ENCODE measurements at regions of chr9 and their contacts with region 1.

Region 1: GRCh38 chr9:121992571-121993212 is 100.4 kb downstream of the TTLL11 start:
- DNase-seq: no peak

Region 2: DNA sequence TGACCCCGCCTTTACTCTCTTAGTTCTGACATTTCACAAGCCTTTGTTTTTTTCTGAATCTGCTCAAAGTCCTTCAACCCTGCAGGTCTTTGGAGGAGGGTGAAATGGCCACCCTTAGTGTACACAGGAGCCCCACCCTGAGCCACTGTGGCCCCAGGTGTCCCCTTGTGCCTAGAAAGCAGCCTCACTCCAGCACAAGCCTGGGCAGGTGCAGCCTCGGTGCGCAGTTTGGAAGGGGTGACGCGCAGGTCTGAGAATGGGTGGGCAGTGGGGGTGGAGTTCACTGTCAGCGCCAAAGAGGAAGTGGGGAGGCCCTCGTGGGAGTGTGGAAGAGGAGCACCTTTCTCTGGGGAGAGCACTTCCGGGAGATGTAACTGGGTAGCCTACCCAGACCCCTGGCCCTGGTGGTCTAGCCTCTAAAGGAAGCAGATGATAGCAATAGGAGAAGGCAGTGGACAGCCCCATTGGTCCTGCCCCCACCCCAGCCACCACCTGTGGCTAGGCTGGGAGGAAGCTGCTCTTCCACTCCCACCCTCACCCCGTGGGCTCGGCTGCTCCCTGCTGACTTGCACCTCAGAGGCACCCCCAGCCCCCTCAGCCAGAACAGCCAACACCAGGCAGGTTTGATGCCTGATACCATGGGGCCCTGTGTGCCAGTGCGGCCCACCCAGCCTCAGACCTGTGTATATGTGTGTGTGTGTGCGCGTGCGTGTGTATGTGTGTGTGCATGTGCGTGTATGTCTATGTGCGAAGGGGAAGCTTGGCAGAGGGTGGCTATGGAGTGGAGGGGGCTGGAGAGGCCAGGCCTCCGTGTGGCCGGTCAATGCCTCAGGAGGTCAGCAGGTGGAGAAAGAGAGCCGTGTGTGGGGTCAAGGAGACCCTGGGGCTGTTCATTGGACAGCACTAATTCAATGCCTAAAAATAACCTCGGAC is 358.1 kb before region 1 on chr9:
- intact Hi-C with region 1: loop called (anchors 5 kb)
- DNase-seq: no peak

Region 3: DNA sequence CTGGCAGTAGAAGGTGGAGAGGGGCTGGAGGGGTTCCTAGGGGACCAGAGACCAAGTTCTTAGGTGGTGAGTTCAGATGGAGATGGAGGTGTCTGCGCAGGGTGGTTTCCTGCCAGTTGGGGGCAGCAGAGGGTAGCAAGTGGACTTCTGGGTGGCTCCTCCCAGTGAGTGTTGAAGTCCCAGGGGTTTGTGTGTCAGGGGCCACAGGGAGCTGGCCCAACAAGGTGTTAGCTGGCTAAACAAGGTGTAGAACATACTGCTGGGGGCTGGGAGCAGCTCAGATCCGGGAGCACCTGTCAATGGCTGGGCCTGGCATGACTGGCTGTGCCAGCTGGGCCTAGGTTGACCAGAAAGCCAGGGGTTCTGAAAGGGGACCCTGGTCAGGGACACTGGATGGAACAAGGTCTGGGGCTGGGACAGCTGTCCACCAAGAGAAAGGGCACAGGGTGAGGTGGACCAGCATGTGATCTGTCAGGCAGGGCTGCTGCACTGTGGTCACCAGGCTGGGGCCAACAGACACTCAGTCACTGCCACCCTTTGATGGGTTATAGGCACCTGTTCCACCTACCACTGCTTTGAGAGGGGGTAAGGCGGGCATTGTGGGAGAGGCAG is 305.7 kb before region 1 on chr9:
- intact Hi-C with region 1: loop called (anchors 2 kb)
- DNase-seq: no peak

Region 4: GRCh38 chr9:121744002-121744686 is 248.5 kb before region 1 on chr9:
- intact Hi-C with region 1: loop called (anchors 2 kb)
- DNase-seq: no peak